ENCODE measurements at regions of chr1 and their contacts with region 1.

Region 1: GRCh38 chr1:95935719-95936118 is 701.7 kb downstream of the RWDD3 start:
- DNase-seq: no peak
- H3K4me3 ChIP-seq: no peak overlapping the region
- H3K27ac ChIP-seq: no peak overlapping the region
- H3K4me1 ChIP-seq: no peaks in the 10 kb centered on the region
- H3K27me3 ChIP-seq: no peaks in the 10 kb centered on the region
- CTCF ChIP-seq: no peak
- EP300 ChIP-seq: no peak
- POLR2A ChIP-seq: no peak

Region 2: GRCh38 chr1:95679262-95679661 is 256.5 kb before region 1 on chr1:
- in situ Hi-C with region 1: no loop called
- intact Hi-C with region 1: no loop called
- DNase-seq: no peak
- H3K4me3 ChIP-seq: no peak overlapping the region
- H3K27ac ChIP-seq: no peak overlapping the region
- H3K4me1 ChIP-seq: no peaks in the 10 kb centered on the region
- H3K27me3 ChIP-seq: no peaks in the 10 kb centered on the region
- CTCF ChIP-seq: no peak
- EP300 ChIP-seq: no peak
- POLR2A ChIP-seq: no peak

Region 3: GRCh38 chr1:95991787-95992520 is 56.2 kb after region 1 on chr1:
- in situ Hi-C with region 1: no loop called
- intact Hi-C with region 1: loop called (anchors 2 kb)
- DNase-seq: no peak
- H3K4me3 ChIP-seq: no peak overlapping the region
- H3K27ac ChIP-seq: no peak overlapping the region
- H3K4me1 ChIP-seq: no peaks in the 10 kb centered on the region
- H3K27me3 ChIP-seq: no peaks in the 10 kb centered on the region
- CTCF ChIP-seq: no peak
- EP300 ChIP-seq: no peak
- POLR2A ChIP-seq: no peak